ENCODE measurements at regions of chr2 and their contacts with region 1.

Region 1: GRCh38 chr2:121071034-121071504 is 213.9 kb downstream of the TFCP2L1 start:
- DNase-seq: peak; percentile 71 to 88
- H3K4me3 ChIP-seq: no peak overlapping the region
- H3K4me3 Mint-ChIP-seq: no peak overlapping the region
- H3K27ac Mint-ChIP-seq: no peak overlapping the region
- H3K4me1 ChIP-seq: peaks cover 12% of the 10 kb centered on the region
- H3K4me1 Mint-ChIP-seq: no peaks in the 10 kb centered on the region
- H3K27me3 ChIP-seq: no peaks in the 10 kb centered on the region
- H3K27me3 Mint-ChIP-seq: peaks cover 3% of the 10 kb centered on the region
- CTCF ChIP-seq: peak; percentile 95 to 96

Region 2: DNA sequence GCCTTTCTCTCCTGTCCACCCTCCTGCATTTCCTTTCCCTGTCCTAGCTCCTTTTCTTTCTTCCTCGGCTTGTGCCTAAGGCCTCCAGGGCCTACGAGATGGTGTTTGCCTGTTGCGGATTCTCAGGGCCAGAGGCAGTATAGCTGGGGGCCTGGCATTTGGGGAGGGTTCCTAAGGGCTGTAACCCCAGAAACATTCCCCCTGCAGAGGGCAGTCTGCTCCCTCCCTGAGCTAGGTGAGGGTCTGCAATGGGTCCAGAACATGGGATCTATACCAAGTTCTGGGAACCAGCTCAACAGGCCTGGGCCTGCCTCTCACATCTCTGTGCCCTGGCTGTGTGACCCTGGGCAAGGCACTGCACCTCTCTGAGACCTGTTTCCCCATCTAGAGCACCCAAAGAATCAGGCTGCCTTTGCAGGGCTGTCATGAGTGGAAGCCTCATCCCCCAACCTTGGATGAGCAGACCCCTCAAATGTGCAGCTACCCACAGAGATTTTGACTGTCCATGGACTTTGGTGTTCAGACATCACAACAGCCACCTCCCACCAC is 237.9 kb before region 1 on chr2:
- CTCF ChIA-PET with region 1: no interaction called
- POLR2A ChIA-PET with region 1: no interaction called
- intact Hi-C with region 1: loop called (anchors 1 kb)
- DNase-seq: no peak
- H3K4me3 ChIP-seq: no peak overlapping the region
- H3K4me3 Mint-ChIP-seq: no peak overlapping the region
- H3K27ac Mint-ChIP-seq: no peak overlapping the region
- H3K4me1 ChIP-seq: no peaks in the 10 kb centered on the region
- H3K4me1 Mint-ChIP-seq: no peaks in the 10 kb centered on the region
- H3K27me3 ChIP-seq: no peaks in the 10 kb centered on the region
- H3K27me3 Mint-ChIP-seq: no peaks in the 10 kb centered on the region
- CTCF ChIP-seq: peak in 1 of 2 experiments; percentile 6

Region 3: GRCh38 chr2:120879431-120880295 is 191.4 kb before region 1 on chr2:
- CTCF ChIA-PET with region 1: interaction called, 7 read pairs
- POLR2A ChIA-PET with region 1: interaction called, 5 read pairs
- intact Hi-C with region 1: loop called (anchors 5 kb)
- DNase-seq: peak in 1 of 2 experiments; percentile 46
- H3K4me3 ChIP-seq: no peak overlapping the region
- H3K4me3 Mint-ChIP-seq: peak overlapping the region; percentile 67
- H3K27ac Mint-ChIP-seq: no peak overlapping the region
- H3K4me1 ChIP-seq: no peaks in the 10 kb centered on the region
- H3K4me1 Mint-ChIP-seq: no peaks in the 10 kb centered on the region
- H3K27me3 ChIP-seq: no peaks in the 10 kb centered on the region
- H3K27me3 Mint-ChIP-seq: no peaks in the 10 kb centered on the region
- CTCF ChIP-seq: peak; percentile 23 to 42

Region 4: GRCh38 chr2:120957905-120958304 is 113.2 kb before region 1 on chr2:
- CTCF ChIA-PET with region 1: interaction called, 8 read pairs
- POLR2A ChIA-PET with region 1: no interaction called
- intact Hi-C with region 1: loop called (anchors 1 kb)
- DNase-seq: no peak
- H3K4me3 ChIP-seq: no peak overlapping the region
- H3K4me3 Mint-ChIP-seq: no peak overlapping the region
- H3K27ac Mint-ChIP-seq: no peak overlapping the region
- H3K4me1 ChIP-seq: no peaks in the 10 kb centered on the region
- H3K4me1 Mint-ChIP-seq: no peaks in the 10 kb centered on the region
- H3K27me3 ChIP-seq: no peaks in the 10 kb centered on the region
- H3K27me3 Mint-ChIP-seq: no peaks in the 10 kb centered on the region
- CTCF ChIP-seq: no peak

Region 5: DNA sequence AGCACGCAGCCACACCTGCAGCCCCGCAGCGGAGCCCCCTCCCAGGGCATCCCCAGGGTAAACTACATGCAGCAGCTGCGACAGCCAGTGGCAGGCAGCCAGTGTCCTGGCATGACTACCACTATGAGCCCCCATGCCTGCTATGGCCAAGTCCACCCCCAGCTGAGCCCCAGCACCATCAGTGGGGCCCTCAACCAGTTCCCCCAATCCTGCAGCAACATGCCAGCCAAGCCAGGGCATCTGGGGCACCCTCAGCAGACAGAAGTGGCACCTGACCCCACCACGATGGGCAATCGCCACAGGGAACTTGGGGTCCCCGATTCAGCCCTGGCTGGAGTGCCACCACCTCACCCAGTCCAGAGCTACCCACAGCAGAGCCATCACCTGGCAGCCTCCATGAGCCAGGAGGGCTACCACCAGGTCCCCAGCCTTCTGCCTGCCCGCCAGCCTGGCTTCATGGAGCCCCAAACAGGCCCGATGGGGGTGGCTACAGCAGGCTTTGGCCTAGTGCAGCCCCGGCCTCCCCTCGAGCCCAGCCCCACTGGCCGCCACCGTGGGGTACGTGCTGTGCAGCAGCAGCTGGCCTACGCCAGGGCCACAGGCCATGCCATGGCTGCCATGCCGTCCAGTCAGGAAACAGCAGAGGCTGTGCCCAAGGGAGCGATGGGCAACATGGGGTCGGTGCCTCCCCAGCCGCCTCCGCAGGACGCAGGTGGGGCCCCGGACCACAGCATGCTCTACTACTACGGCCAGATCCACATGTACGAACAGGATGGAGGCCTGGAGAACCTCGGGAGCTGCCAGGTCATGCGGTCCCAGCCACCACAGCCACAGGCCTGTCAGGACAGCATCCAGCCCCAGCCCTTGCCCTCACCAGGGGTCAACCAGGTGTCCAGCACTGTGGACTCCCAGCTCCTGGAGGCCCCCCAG is 81.3 kb before region 1 on chr2:
- CTCF ChIA-PET with region 1: no interaction called
- POLR2A ChIA-PET with region 1: no interaction called
- intact Hi-C with region 1: no loop called
- DNase-seq: no peak
- H3K4me3 ChIP-seq: no peak overlapping the region
- H3K4me3 Mint-ChIP-seq: no peak overlapping the region
- H3K27ac Mint-ChIP-seq: no peak overlapping the region
- H3K4me1 ChIP-seq: no peaks in the 10 kb centered on the region
- H3K4me1 Mint-ChIP-seq: no peaks in the 10 kb centered on the region
- H3K27me3 ChIP-seq: no peaks in the 10 kb centered on the region
- H3K27me3 Mint-ChIP-seq: no peaks in the 10 kb centered on the region
- CTCF ChIP-seq: no peak